ENCODE measurements at regions of chrX and their contacts with region 1.

Region 1: DNA sequence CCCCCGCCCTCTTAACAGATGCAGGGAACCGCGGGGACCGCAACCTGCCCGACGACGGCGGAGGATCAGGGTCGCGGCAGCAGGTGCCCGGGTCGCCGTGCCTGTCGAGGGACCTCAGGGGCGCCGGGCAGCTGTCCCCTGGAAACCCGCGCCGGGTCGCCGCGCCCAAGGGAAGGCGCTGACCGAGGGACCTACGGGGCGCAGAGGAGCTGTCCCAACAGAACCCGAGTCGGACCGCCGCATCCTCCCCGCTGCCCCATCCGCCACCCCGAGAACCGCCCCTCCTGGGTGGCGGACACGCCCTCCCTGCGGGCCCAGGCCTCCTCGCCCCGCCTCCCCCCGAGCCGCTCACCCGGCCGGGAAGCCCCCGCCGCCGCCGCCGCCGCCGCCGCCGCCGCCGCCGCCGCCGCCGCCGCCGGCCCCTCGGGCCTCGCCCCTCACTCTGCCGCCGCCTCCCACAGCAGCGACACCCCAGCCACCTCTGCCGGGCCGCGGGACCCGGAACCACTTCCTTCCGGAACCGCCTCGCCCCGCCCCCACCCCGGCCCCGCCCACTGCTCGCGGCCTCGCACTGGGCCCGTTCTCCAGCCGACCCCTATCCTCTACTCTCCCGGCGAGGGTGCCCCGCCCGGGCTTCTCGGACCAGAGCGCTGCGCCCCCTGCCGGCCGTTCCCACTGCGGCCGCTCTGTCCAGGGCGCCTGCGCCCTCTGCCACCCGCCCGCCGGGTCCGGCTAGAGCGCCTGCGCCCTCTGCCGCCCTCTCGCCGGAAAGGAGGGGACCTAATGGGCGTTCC is at the start of gene BCLAF3:
- DNase-seq: peak; percentile 79
- ATAC-seq: peak; percentile 97
- H3K4me3 ChIP-seq: peak within 1 kb of the TSS; percentile 83
- H3K27ac ChIP-seq: peak within 1 kb of the TSS; percentile 56
- H3K4me1 ChIP-seq: no peaks in the 10 kb centered on the region; the same call in 1 of the 2 replicates
- H3K27me3 ChIP-seq: no peaks in the 10 kb centered on the region; the same call in 1 of the 2 replicates
- CTCF ChIP-seq: peak; percentile 86
- POLR2A ChIP-seq: no peak
- RAD21 ChIP-seq: peak; percentile 53
- total RNA-seq, gene BCLAF3: 1.6 and 2.8 TPM in 2 replicates

Region 2: DNA sequence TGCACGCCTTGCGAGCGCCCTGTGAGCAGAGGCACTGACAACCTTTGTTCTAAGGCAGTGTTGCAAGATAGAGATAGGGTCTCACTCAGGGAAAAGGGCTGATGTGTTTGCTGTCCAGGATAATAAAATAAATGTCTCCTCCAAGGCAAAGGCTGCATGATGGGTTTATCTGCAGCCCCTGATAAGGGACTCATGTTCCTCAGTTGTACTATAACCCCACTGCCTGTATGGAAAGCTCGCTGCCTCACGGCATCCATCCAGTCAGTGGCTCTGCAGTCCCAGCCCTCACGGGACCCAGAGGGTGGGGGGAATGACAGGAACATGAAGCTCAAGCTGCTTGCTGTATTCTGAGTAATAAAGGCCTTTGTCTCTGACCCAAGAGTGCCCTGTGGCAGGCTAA is 22.5 kb before region 1 on chrX:
- CTCF ChIA-PET with region 1: no interaction called
- POLR2A ChIA-PET with region 1: no interaction called
- dilution Hi-C with region 1: no loop called
- in situ Hi-C with region 1: no loop called
- intact Hi-C with region 1: no loop called
- DNase-seq: no peak
- ATAC-seq: no peak
- H3K4me3 ChIP-seq: no peak overlapping the region
- H3K27ac ChIP-seq: no peak overlapping the region
- H3K4me1 ChIP-seq: no peaks in the 10 kb centered on the region
- H3K27me3 ChIP-seq: no peaks in the 10 kb centered on the region
- CTCF ChIP-seq: no peak
- POLR2A ChIP-seq: no peak
- RAD21 ChIP-seq: no peak

Region 3: GRCh38 chrX:20116579-20117240 is 126.0 kb after region 1 on chrX and contains the start of gene MAP7D2:
- CTCF ChIA-PET with region 1: no interaction called
- POLR2A ChIA-PET with region 1: no interaction called
- dilution Hi-C with region 1: no loop called
- in situ Hi-C with region 1: no loop called
- intact Hi-C with region 1: loop called (anchors 5 kb)
- DNase-seq: no peak
- ATAC-seq: peak; percentile 42
- H3K4me3 ChIP-seq: no peak within 1 kb of the TSS; the same call in 1 of the 2 replicates
- H3K27ac ChIP-seq: no peak within 1 kb of the TSS
- H3K4me1 ChIP-seq: no peaks in the 10 kb centered on the region
- H3K27me3 ChIP-seq: peaks cover 32% of the 10 kb centered on the region
- CTCF ChIP-seq: no peak
- POLR2A ChIP-seq: no peak
- RAD21 ChIP-seq: no peak
- total RNA-seq, gene MAP7D2: under 0.01 and 0.18 TPM in 2 replicates

Measured in IMR-90 (cell line).